Endothelial cell of umbilical vein (primary cell): ENCODE measurements at regions of chr16 and their contacts with region 1.

Region 1: GRCh38 chr16:15592324-15592723 is 50.6 kb downstream of the MARF1 start:
- DNase-seq: no peak
- H3K4me3 ChIP-seq: no peak overlapping the region
- H3K27ac ChIP-seq: no peak overlapping the region
- H3K4me1 ChIP-seq: peaks cover 17% of the 10 kb centered on the region
- H3K27me3 ChIP-seq: no peaks in the 10 kb centered on the region
- CTCF ChIP-seq: no peak
- POLR2A ChIP-seq: no peak

Region 2: DNA sequence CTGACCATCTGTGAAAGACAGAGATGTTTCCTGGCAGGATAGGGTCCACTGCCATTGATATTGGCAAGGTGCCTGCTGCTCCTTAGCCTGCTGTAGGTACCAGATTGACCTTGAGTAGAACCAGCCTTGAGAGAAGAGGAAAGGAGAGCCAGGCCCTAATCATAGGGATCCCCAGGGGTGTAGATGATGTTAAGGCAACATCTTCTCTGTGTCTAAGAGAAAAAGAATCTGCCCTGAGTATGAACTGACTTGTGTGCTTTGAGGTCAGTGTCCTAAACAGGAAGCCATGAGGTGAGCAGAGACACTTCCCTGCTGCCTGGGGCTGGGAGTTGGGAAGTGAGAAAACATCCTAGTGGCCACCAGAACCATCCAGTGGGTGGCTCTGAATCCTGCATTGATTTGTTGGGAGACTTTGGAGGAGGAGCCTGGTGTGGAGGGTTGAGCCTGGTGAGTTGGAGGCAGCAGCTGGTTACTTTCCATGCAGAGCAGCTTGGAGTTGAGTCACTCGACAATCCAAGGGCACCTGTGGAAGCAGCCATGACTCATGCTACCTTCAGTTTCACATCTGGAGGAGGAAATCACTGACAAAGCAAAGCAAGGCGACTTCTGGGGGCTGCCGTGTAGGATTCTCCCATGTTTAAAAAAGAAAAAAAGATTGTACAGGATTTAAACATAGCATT is 110.1 kb before region 1 on chr16:
- CTCF ChIA-PET with region 1: no interaction called
- POLR2A ChIA-PET with region 1: no interaction called
- dilution Hi-C with region 1: no loop called
- intact Hi-C with region 1: loop called (anchors 2 kb)
- DNase-seq: peak; percentile 95
- H3K4me3 ChIP-seq: no peak overlapping the region
- H3K27ac ChIP-seq: peak overlapping the region; percentile 10
- H3K4me1 ChIP-seq: peaks cover 12% of the 10 kb centered on the region
- H3K27me3 ChIP-seq: no peaks in the 10 kb centered on the region
- CTCF ChIP-seq: no peak
- POLR2A ChIP-seq: no peak

Region 3: GRCh38 chr16:15518390-15519351 is 73.7 kb before region 1 on chr16:
- CTCF ChIA-PET with region 1: no interaction called
- POLR2A ChIA-PET with region 1: no interaction called
- dilution Hi-C with region 1: no loop called
- intact Hi-C with region 1: loop called (anchors 1 kb)
- DNase-seq: peak; percentile 85
- H3K4me3 ChIP-seq: no peak overlapping the region
- H3K27ac ChIP-seq: no peak overlapping the region
- H3K4me1 ChIP-seq: peaks cover 25% of the 10 kb centered on the region
- H3K27me3 ChIP-seq: no peaks in the 10 kb centered on the region
- CTCF ChIP-seq: no peak
- POLR2A ChIP-seq: no peak

Region 4: GRCh38 chr16:15643048-15643945 is 51.0 kb after region 1 on chr16 and contains the start of gene MARF1:
- CTCF ChIA-PET with region 1: interaction called, 3 read pairs
- POLR2A ChIA-PET with region 1: no interaction called
- dilution Hi-C with region 1: no loop called
- intact Hi-C with region 1: loop called (anchors 1 kb)
- DNase-seq: peak; percentile 94
- H3K4me3 ChIP-seq: peak within 1 kb of the TSS; percentile 61 to 98 (median 95)
- H3K27ac ChIP-seq: peak within 1 kb of the TSS; percentile 99
- H3K4me1 ChIP-seq: peaks cover 18% of the 10 kb centered on the region
- H3K27me3 ChIP-seq: peaks cover 0 to 2% of the 10 kb centered on the region in 2 experiments
- CTCF ChIP-seq: peak; percentile 32 to 42
- POLR2A ChIP-seq: peak; percentile 94
- total RNA-seq, gene MARF1: 54.3 and 58.5 TPM in 2 replicates

Region 5: GRCh38 chr16:15807603-15808009 is 215.3 kb after region 1 on chr16:
- CTCF ChIA-PET with region 1: no interaction called
- POLR2A ChIA-PET with region 1: no interaction called
- dilution Hi-C with region 1: no loop called
- intact Hi-C with region 1: no loop called
- DNase-seq: no peak
- H3K4me3 ChIP-seq: no peak overlapping the region
- H3K27ac ChIP-seq: no peak overlapping the region
- H3K4me1 ChIP-seq: no peaks in the 10 kb centered on the region
- H3K27me3 ChIP-seq: peaks cover 7 to 17% of the 10 kb centered on the region in 2 experiments
- CTCF ChIP-seq: no peak
- POLR2A ChIP-seq: no peak